GM10248 (cell line): ENCODE measurements at regions of chr1 and their contacts with region 1.

Region 1: GRCh38 chr1:185546029-185546428 is 188.2 kb upstream of the HMCN1 start:
- DNase-seq: no peak
- CTCF ChIP-seq: no peak

Region 2: DNA sequence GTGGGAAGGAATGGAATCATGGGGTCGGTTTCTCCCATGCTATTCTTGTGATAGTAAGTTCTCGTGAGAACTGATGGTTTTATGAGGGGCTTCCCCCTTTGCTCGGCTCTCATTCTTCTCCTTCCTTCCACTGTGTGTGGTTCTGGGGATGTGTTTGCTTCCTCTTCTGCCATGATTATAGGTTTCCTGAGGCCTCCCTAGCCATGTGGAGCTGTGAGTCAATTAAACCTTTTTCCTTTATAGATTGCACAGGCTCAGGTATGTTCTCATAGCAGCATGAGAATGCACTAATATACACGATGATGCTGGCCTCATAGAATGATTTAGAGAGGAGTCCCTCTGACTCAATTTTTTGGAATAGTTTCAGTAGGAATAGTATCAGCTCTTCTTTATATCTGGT is 33.6 kb before region 1 on chr1:
- CTCF ChIA-PET with region 1: no interaction called
- POLR2A ChIA-PET with region 1: no interaction called
- DNase-seq: no peak
- CTCF ChIP-seq: no peak

Region 3: GRCh38 chr1:185559684-185560331 is 13.8 kb after region 1 on chr1:
- CTCF ChIA-PET with region 1: interaction called, 15 read pairs
- POLR2A ChIA-PET with region 1: no interaction called
- DNase-seq: peak; percentile 66
- CTCF ChIP-seq: peak; percentile 46

Region 4: GRCh38 chr1:185565302-185565701 is 19.3 kb after region 1 on chr1:
- CTCF ChIA-PET with region 1: interaction called, 15 read pairs
- POLR2A ChIA-PET with region 1: no interaction called
- DNase-seq: no peak
- CTCF ChIP-seq: no peak